Right ventricle myocardium inferior (tissue), 1 donor: ENCODE measurements at regions of chr10 and their contacts with region 1.

Region 1: GRCh38 chr10:92880233-92880861 is 32.0 kb downstream of the EXOC6 start:
- DNase-seq: no peak
- ATAC-seq: peak; percentile 56

Region 2: DNA sequence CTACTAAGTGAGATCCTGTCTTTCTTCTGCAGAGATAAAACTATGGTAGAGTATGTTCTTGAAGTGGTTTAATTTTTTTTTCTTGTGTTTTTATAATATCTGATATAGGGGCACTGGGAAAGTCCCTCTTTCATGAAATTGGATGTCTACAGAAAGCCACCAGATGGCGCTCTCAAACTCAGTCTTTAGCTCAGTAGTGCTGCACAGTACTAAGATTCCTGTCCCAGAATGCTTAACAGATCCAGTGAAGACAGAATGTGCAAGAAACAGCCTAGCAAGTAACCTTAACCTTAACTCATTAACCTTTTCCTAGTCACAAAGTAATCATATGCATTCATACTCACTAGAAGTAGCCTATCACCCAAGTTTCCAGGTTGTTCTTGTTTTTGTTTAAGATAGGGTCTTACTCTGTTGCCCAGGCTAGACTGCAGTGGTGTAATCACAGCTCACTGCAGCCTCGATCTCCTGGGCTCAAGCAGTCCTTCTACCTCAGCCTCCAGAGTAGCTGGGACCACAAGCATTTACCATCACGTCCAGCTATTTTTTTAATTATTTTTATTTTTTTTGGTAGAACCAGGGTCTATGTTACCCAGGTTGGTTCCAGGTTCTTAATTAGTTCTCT is 363.2 kb before region 1 on chr10:
- intact Hi-C with region 1: loop called (anchors 2 kb)
- DNase-seq: no peak
- ATAC-seq: no peak

Region 3: DNA sequence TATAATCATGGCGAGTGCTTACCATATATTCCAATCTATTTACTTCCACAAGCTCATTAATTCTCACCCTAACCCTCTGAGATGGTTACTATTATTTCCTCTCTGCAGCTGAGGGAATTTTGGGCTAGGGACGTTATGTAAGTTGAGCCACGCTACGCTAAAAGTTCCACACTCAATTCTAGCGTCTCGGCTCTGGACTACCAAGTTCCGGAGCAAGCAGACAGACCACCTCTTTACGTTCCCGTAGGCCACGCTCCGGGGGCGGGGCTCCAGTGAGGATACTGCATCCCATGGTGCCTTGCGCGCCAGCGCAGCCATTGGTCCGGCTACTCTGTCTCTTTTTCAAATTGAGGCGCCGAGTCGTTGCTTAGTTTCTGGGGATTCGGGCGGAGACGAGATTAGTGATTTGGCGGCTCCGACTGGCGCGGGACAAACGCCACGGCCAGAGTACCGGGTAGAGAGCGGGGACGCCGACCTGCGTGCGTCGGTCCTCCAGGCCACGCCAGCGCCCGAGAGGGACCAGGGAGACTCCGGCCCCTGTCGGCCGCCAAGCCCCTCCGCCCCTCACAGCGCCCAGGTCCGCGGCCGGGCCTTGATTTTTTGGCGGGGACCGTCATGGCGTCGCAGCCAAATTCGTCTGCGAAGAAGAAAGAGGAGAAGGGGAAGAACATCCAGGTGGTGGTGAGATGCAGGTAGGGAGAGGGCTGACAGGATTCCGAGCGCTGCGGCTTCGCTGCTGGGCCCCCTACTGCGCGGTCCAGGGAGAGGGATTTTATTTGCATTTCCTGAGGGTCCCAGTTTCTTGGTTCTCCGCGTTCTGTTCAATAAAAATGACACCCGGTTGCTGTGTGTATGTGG is 287.4 kb before region 1 on chr10 and contains the start of gene KIF11:
- intact Hi-C with region 1: loop called (anchors 5 kb)
- DNase-seq: peak; percentile 100
- ATAC-seq: peak; percentile 97
- total RNA-seq, gene KIF11: 1.1 TPM

Region 4: DNA sequence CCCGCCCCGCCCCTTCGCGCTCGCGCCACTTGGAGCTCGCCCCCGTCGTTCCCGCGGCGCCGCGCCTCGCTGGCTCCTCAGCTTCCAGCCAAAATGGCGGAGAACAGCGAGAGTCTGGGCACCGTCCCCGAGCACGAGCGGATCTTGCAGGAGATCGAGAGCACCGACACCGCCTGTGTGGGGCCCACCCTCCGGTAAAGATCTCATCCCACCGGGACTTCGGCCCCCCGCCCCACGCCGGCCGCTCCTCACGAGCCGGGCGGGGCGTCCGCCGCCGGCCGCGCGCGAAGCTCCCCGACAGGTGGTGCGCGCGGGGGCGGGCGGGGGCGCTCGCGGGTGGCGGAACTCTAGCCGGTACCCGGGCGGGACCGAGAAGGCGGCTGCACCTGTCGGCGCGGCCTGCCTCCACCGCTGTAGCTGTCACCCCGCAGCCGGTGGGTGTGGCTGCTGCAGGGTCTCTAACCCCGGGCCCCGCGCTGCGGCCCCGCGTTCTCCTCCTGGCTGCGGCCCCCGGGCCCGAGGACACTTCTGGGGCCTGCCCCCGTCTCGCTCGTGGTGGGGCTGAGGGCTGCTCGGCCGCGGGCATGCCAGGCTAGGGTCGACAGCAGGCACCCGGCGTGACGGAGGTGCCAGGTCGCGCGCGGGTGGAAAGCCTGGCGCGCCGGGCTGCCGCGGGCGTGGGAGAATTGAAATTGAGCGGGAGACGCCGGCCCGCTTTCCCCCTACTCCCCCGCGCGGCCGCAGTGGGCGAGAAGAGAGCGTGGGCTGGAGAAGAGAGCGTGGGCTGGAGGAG is 31.7 kb before region 1 on chr10 and contains the start of gene EXOC6:
- intact Hi-C with region 1: loop called (anchors 2 kb)
- DNase-seq: peak; percentile 92
- ATAC-seq: peak; percentile 87
- total RNA-seq, gene EXOC6: 10.1 TPM

Region 5: DNA sequence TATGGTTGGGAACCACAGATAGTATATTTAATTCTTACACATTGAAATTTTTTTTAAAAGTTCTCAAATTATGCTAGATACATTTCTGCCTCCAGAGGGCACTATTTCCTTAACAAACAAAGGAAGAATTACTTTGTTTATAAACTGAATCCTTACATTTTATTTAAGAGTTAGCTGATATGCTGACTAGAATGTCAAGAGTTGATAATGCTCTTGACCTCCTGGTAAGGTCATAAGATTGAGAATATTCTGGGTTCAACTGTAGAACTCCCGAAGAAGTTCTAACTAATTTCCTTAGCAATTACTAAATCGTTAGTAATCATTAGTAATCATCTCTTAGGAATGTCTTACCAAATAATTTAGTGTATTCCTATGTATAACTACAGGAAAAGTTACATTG is 85.0 kb after region 1 on chr10:
- intact Hi-C with region 1: no loop called
- DNase-seq: no peak
- ATAC-seq: no peak

Region 6: DNA sequence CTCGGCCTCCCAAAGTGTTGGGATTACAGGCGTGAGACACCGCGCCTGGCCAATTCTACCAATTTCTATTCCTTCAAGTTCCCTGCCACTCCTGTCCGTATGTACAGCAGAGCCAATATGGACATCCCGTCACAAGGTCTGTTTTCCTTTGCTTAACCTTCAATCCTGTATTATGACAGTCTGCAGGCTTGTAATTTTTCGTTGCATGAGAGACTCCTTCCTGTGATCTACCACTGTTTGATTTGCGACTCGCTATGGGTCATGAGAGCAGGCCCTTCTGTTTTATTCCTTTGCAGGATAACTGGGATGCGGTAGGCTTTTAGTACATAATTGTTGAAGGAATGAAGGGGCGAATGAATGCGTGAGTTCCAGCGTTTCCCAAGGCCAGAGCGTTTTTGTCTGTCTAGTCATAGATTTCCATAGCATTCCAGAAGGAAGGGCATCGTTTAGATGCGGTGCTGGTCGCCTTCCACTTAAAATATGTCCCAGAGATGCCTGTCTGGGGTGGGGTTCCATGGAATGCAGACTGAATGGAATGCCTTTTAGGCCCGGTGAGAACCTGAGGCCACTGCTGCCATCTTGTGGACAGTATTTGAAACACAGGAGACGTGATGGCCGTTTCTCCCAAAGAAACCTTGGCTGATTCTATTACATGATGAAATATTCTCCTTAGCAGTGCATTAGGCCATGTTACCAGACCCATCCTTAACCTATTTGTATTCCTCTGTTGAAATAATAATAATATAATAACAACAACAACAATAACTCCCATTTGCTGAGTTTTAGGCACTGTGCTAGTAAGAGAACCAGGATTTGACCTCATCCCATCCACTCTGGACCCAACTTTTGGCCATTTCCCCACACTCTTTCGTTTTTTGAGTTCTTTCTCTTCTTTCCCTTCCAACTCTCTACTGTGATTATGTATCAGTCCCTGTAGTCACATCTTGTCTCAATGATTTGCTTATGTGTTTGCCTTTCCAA is 408.6 kb after region 1 on chr10:
- intact Hi-C with region 1: loop called (anchors 10 kb)
- DNase-seq: no peak
- ATAC-seq: peak; percentile 70

Region 7: DNA sequence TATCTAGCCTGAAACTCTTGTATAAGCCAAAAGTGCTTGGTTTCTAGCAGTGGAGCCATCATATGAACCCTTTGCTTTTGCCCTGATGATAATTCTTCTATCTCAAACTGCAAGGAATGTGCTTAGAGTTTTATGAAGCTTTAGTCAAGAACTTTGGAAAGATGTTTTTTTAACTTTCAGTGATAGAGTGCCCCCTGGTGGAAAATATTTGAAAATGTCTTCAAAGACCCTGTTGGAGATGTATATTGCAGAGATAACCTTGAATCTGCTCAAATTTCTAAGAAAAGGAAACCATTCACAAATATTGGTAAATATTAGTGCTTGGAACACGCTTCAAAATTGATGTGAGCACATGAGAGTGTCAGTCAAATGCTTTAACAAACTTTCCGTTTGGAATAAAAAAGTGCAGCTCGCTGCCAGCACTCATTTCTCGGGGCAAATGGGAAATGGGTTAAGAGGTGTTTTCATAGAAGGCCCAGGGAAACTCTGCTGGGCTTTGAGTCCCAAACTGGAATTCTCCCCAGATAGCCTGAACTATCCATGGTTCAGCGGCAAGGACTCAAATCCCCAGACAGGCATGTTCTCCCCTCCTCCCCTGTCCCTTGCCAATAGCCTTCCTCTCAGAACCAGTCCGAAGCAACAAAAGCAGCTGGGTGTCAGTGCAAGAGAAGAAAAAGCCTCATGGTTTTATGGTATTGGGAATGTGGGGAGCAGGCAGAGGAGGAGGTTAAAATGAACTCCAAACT is 472.5 kb after region 1 on chr10:
- intact Hi-C with region 1: loop called (anchors 10 kb)
- DNase-seq: no peak
- ATAC-seq: no peak